Mucosa of descending colon (tissue), 3 donors: ENCODE measurements at regions of chr6 and their contacts with region 1.

Region 1: GRCh38 chr6:133923938-133924593 is 29.0 kb upstream of the TBPL1 start:
- DNase-seq: peak in 1 of 3 donors; percentile 87
- ATAC-seq: peak; percentile 91
- H3K4me3 ChIP-seq: no peak overlapping the region
- H3K4me1 ChIP-seq: no peaks in the 10 kb centered on the region
- CTCF ChIP-seq: peak; percentile 32

Region 2: DNA sequence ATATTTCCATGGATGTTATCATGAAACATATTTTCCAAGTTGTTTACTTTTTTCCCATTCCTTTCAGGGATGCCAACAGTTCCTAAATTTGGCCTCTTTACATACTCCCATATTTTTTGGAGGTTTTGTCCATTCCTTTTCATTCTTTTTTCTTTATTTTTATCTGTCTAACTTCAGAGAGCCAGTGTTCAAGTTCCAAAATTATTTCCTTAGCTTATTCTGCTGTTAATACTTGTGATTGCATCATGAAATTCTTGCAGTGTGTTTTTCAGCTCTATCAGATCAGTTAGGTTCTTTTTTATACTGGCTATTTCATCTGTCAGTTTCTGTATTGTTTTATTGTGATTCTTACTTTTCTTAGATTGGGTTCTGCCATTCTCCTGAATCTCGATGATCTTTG is 125.0 kb before region 1 on chr6:
- intact Hi-C with region 1: no loop called
- DNase-seq: no peak
- ATAC-seq: no peak
- H3K4me3 ChIP-seq: no peak overlapping the region
- H3K4me1 ChIP-seq: no peaks in the 10 kb centered on the region
- CTCF ChIP-seq: no peak

Region 3: DNA sequence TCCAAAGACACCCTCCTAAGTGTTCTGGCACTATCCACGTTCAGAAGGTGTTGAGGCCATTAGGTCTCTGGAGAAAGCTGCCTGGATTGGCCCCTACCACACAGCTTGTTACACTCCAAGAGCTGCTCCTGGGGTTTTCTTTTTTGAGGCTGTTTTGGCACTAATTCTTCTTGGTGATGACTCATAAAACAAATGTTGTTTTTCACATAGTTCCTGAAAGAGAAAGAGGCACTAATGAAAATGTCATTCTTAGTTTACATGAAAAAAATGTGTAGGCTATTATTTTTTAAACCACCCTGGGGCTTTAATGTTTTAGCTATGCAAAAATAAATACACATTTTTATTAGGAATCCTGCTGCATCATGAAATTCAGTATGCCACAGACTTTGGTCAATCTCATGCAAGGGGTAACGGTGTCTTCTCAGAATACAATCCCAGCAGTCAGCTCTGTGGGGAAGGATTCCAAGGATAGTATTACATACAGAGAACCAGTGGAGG is 67.1 kb after region 1 on chr6:
- intact Hi-C with region 1: no loop called
- DNase-seq: no peak
- ATAC-seq: no peak
- H3K4me3 ChIP-seq: no peak overlapping the region
- H3K4me1 ChIP-seq: no peaks in the 10 kb centered on the region
- CTCF ChIP-seq: no peak

Region 4: DNA sequence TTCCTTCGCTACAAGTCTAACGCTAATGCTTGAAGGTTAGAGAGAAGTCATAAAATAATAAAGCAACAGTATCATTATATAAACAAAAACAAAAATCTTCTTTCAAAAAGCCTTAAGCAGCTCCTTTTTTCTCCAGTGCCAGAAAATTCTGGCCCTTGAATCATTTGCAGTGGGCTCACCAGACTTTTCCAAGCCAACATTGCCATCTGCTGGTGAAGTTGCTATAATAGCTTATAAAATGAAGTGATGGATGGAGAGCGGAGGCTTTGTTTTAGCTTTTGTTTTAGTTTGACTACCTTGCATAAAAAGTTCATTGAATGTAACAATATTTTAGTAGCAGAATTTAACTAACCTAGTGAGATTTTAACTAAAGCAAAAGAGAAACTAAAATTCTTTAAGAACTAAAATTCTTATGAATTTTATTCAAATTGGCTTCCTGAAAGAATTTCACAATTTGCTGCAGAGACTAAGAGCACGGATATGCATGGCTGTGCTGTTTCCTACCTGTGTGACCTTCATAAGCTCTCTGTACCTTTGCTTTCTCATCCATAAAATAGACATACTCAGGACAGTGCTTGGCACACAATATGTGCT is 173.1 kb after region 1 on chr6:
- intact Hi-C with region 1: loop called (anchors 5 kb)
- DNase-seq: peak in 1 of 3 donors; percentile 86
- ATAC-seq: peak; percentile 54
- H3K4me3 ChIP-seq: no peak overlapping the region
- H3K4me1 ChIP-seq: no peaks in the 10 kb centered on the region
- CTCF ChIP-seq: peak; percentile 26